ENCODE measurements at regions of chr18 and their contacts with region 1.

Region 1: GRCh38 chr18:31722369-31722957 is 38.1 kb upstream of the B4GALT6 start:
- DNase-seq: peak; percentile 80
- H3K4me3 ChIP-seq: no peak overlapping the region
- H3K27ac ChIP-seq: no peak overlapping the region
- H3K4me1 ChIP-seq: peaks cover 2% of the 10 kb centered on the region
- H3K27me3 ChIP-seq: peaks cover 18 to 19% of the 10 kb centered on the region in 2 experiments
- CTCF ChIP-seq: peak; percentile 84 to 87
- POLR2A ChIP-seq: no peak

Region 2: GRCh38 chr18:31563778-31564177 is 158.7 kb before region 1 on chr18:
- CTCF ChIA-PET with region 1: interaction called, 18 read pairs
- POLR2A ChIA-PET with region 1: no interaction called
- dilution Hi-C with region 1: no loop called
- intact Hi-C with region 1: no loop called
- DNase-seq: no peak
- H3K4me3 ChIP-seq: no peak overlapping the region
- H3K27ac ChIP-seq: no peak overlapping the region
- H3K4me1 ChIP-seq: no peaks in the 10 kb centered on the region
- H3K27me3 ChIP-seq: peaks cover 0 to 4% of the 10 kb centered on the region in 2 experiments
- CTCF ChIP-seq: no peak
- POLR2A ChIP-seq: no peak

Region 3: DNA sequence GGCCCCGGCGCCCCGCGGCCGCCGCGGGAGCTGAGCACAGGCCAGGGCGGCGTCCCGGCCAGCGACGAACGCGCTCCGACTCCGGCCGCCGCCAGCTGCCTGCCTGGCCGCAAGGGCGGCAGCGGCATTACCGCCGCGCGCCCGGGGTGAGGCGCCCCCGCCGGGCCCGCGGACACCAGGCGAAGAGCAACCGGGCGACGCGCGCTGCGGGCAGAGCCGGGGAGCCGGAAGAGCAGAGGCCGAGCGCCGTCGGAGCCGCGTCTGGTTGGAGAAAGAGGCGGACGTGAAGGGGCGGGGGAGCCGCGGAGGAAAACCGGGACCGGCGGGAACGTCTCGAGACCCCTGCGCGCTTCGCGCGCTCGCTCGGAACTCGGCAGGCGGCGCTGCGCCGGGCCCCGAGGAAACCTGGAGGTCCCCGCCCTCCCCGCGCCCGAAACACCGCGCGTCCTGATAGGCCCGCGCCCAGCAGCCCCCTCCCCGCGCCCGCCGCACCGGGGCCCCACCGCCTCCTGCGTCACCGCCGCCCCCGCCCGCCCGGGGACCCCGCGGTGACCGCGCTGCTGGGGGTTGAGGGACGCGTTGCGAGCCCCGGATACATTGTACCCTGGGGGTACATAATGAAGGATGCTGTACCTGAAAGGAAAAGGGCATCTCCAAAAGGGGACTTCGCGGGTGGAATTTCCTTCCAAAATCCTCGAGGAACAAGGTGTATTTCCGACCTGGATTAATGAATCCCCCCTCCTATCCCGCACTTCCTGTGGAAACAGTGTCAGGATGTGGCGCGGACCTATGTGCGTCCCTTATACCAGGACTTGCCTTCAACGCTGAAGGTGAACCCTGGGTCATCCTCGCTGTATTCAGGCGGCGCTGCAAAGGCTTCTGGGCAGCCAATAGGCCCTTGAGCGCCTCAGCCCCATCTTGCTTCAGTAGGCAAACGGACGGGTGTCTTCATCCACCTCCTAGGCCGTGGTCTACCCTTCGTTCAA is 37.1 kb before region 1 on chr18:
- CTCF ChIA-PET with region 1: interaction called, 3 read pairs
- POLR2A ChIA-PET with region 1: no interaction called
- dilution Hi-C with region 1: no loop called
- intact Hi-C with region 1: loop called (anchors 2 kb)
- DNase-seq: peak; percentile 83
- H3K4me3 ChIP-seq: peak overlapping the region; percentile 52 to 68 (median 59)
- H3K27ac ChIP-seq: peak overlapping the region; percentile 39
- H3K4me1 ChIP-seq: peaks cover 31% of the 10 kb centered on the region
- H3K27me3 ChIP-seq: no peaks in the 10 kb centered on the region
- CTCF ChIP-seq: peak; percentile 35 to 50
- POLR2A ChIP-seq: peak; percentile 48

Region 4: DNA sequence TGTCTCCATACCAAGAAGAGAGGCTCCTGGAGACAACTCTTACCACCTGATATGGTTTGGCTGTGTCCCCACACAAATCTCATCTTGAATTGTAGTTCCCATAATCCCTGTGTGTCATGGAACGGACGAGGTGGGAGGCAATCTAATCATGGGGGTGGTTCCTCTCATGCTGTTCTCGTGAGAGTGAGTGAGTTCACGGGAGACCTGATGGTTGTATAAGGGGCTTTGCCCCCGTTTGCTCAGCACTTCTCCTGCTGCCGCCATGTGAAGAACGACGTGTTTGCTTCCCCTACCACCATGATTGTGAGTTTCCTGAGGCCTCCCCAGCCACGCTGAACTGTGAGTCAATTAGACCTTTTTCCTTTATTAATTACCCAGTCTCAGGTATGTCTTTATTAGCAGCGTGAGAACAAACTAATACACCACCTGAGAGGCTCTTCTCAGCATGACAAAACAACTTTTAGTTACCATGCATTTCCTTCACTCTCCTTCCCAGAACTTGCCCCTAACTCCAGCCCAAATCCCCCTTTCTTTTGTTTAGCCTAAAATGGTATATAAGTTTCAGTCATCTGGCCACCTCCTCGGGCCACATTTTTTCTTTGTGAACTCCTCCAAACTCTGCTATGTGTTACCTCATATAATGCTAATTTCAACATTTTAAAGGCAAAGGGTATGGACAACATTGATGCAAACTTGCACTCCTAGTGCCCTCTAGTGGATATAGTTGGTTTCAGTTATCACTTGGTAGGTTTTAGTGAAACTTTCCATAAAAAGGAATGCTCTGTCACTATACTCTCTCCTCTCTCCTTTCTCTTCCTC is 96.9 kb after region 1 on chr18:
- CTCF ChIA-PET with region 1: no interaction called
- POLR2A ChIA-PET with region 1: no interaction called
- dilution Hi-C with region 1: no loop called
- intact Hi-C with region 1: loop called (anchors 5 kb)
- DNase-seq: peak; percentile 52
- H3K4me3 ChIP-seq: no peak overlapping the region
- H3K27ac ChIP-seq: no peak overlapping the region
- H3K4me1 ChIP-seq: no peaks in the 10 kb centered on the region
- H3K27me3 ChIP-seq: peaks cover 4 to 7% of the 10 kb centered on the region in 2 experiments
- CTCF ChIP-seq: peak; percentile 51 to 64
- POLR2A ChIP-seq: no peak

Region 5: DNA sequence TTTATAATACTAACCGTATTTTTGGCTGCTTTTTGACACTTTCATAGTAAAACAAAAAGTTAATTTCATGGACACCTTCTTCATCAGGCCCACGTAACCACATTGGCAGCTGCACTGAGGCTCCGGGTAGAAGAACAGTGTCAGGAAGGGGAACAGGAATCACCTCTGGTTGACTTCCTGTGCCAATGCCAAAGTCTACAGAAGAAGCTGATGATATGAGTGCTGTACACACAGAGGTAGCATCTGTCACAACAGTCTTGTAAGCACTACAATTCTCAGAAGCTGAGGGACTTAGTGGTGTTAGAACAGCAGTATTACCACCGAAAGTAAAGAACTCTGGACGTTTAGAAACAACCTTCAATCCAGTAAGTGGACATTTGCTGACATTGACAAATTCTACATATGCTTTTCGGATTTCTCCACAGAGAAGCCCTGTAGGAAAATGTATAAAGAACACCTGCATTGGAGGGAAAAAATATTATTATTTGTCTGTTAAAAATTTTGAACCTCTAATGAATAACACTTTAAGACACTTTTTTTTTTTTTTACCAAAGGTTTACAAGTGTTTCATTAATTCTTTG is 135.2 kb after region 1 on chr18:
- CTCF ChIA-PET with region 1: no interaction called
- POLR2A ChIA-PET with region 1: no interaction called
- dilution Hi-C with region 1: no loop called
- intact Hi-C with region 1: no loop called
- DNase-seq: peak; percentile 65
- H3K4me3 ChIP-seq: no peak overlapping the region
- H3K27ac ChIP-seq: peak overlapping the region; percentile 12
- H3K4me1 ChIP-seq: peaks cover 15% of the 10 kb centered on the region
- H3K27me3 ChIP-seq: no peaks in the 10 kb centered on the region
- CTCF ChIP-seq: no peak
- POLR2A ChIP-seq: no peak

Region 6: GRCh38 chr18:31977270-31977872 is 254.9 kb after region 1 on chr18:
- CTCF ChIA-PET with region 1: interaction called, 19 read pairs
- POLR2A ChIA-PET with region 1: no interaction called
- dilution Hi-C with region 1: no loop called
- intact Hi-C with region 1: no loop called
- DNase-seq: peak; percentile 48
- H3K4me3 ChIP-seq: no peak overlapping the region
- H3K27ac ChIP-seq: no peak overlapping the region
- H3K4me1 ChIP-seq: peaks cover 3% of the 10 kb centered on the region
- H3K27me3 ChIP-seq: peaks cover 0 to 5% of the 10 kb centered on the region in 2 experiments
- CTCF ChIP-seq: peak; percentile 55 to 59
- POLR2A ChIP-seq: no peak

Measured in endothelial cell of umbilical vein (primary cell).